GM12878 (cell line): ENCODE measurements at regions of chr3 and their contacts with region 1.

Region 1: DNA sequence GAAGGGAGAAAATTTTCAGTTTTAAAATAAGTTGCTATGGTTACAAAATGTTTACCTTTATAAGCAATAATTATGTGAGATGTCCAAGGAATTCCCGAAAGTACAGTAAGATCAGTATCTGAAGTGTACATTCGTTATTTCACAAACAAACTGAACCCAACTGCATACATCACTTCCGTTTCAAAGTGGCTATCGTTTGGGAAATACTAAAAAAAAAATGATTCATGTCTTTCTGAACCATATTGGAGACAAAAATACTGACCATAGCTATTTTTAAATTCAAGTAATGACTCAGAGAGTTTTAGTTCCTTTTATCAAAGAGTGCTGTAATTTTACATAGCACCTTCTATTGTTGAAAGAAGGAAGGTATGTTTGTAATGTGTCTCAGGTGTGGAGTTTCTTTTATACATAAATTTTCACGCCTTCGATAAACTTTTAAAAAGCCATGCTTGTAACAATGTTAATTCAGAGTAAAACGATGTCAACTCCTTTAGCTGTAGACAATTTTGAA is 8.0 kb upstream of the ANKRD28 start:
- DNase-seq: peak; percentile 89
- ATAC-seq: peak; percentile 71
- H3K4me3 ChIP-seq: peak overlapping the region; percentile 49
- H3K27ac ChIP-seq: peak overlapping the region; percentile 84
- H3K4me1 ChIP-seq: peaks cover 75% of the 10 kb centered on the region
- H3K27me3 ChIP-seq: no peaks in the 10 kb centered on the region
- CTCF ChIP-seq: no peak; a peak in 1 of 6 replicates
- EP300 ChIP-seq: peak; percentile 96 to 99
- POLR2A ChIP-seq: no peak
- RAD21 ChIP-seq: no peak

Region 2: GRCh38 chr3:15015456-15015855 is 790.4 kb before region 1 on chr3:
- CTCF ChIA-PET with region 1: no interaction called
- POLR2A ChIA-PET with region 1: no interaction called
- RAD21 ChIA-PET with region 1: no interaction called
- SMC1A ChIA-PET with region 1: no interaction called
- in situ Hi-C with region 1: no loop called
- intact Hi-C with region 1: no loop called
- DNase-seq: no peak
- ATAC-seq: no peak
- H3K4me3 ChIP-seq: no peak overlapping the region
- H3K27ac ChIP-seq: no peak overlapping the region
- H3K4me1 ChIP-seq: no peaks in the 10 kb centered on the region
- H3K27me3 ChIP-seq: no peaks in the 10 kb centered on the region
- CTCF ChIP-seq: no peak
- EP300 ChIP-seq: no peak
- POLR2A ChIP-seq: no peak
- RAD21 ChIP-seq: no peak

Region 3: DNA sequence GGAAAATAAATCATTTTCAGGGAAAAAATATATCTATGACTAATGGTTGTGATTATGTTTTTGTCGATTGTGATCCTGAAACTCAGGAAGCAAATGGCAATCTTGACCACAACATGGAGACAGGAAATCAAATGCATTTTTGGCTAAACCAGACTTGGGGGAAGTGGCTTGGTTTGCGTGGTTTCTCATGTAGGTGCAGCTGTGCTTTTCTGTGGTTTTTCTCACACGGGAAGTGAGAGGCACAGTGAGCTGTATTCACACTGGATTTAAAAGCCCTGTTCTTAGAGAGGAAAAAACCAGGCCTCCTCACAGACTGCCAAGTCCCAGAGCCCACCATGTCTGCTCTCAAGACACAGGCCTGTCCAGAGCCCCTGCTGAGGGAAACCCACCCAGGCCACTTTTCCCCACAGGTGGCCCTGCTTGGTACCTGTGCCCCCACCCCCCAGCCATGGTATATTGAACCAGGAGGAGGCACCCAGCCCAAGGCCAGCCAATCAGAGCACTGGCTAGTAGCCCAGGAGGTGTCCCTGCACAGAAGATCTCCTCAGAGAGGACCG is 158.1 kb before region 1 on chr3:
- CTCF ChIA-PET with region 1: interaction called, 7 read pairs
- POLR2A ChIA-PET with region 1: interaction called, 4 read pairs
- RAD21 ChIA-PET with region 1: interaction called, 5 read pairs
- SMC1A ChIA-PET with region 1: interaction called, 12 read pairs
- in situ Hi-C with region 1: no loop called
- intact Hi-C with region 1: loop called (anchors 1 kb)
- DNase-seq: peak; percentile 94
- ATAC-seq: peak; percentile 96
- H3K4me3 ChIP-seq: peak overlapping the region; percentile 24
- H3K27ac ChIP-seq: peak overlapping the region; percentile 81
- H3K4me1 ChIP-seq: peaks cover 38% of the 10 kb centered on the region
- H3K27me3 ChIP-seq: no peaks in the 10 kb centered on the region
- CTCF ChIP-seq: no peak
- EP300 ChIP-seq: peak; percentile 87 to 95
- POLR2A ChIP-seq: peak; percentile 30; the same call in 1 of the 2 replicates
- RAD21 ChIP-seq: no peak

Region 4: GRCh38 chr3:15726043-15726442 is 79.8 kb before region 1 on chr3:
- CTCF ChIA-PET with region 1: interaction called, 6 read pairs
- POLR2A ChIA-PET with region 1: interaction called, 5 read pairs
- RAD21 ChIA-PET with region 1: interaction called, 9 read pairs
- SMC1A ChIA-PET with region 1: interaction called, 19 read pairs
- in situ Hi-C with region 1: no loop called
- intact Hi-C with region 1: no loop called
- DNase-seq: peak; percentile 60
- ATAC-seq: peak; percentile 93
- H3K4me3 ChIP-seq: no peak overlapping the region
- H3K27ac ChIP-seq: peak overlapping the region; percentile 71
- H3K4me1 ChIP-seq: peaks cover 18% of the 10 kb centered on the region
- H3K27me3 ChIP-seq: no peaks in the 10 kb centered on the region
- CTCF ChIP-seq: no peak
- EP300 ChIP-seq: no peak
- POLR2A ChIP-seq: no peak
- RAD21 ChIP-seq: no peak

Region 5: DNA sequence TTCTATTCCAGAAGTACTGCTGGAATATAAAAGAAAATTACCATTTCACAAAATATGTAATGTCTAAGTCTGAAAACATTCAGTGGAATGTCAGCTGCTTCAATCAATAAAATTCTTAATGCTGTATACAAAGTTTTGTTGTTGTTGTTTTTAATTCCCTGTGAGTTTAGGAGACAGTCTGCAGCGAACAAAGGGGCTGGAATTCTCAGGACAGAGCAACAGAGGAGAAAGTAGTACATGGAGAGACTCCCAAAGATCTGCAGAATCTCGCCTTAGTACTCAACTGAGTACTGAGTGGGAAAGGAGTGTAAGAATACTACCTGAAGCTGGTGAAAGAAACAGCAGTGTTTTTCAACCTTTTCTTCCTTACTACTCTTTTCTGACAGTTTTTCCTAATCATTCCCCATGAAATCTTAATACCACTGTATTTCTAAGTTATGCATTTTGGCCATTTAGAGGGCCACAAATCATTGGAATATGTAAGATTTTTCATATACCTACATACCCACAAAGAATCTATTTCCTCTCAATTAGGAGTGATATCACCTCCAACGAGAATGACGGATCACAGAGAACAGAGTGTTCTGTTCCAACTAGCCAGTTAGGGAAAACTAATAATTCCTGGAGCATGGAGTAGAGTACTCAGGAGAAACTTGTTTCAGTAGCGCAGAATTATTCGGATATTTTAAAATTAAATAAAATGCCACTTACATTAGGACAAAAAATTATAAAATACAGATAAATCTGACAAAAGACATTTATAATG is 24.0 kb before region 1 on chr3:
- CTCF ChIA-PET with region 1: interaction called, 7 read pairs
- POLR2A ChIA-PET with region 1: interaction called, 3 read pairs
- RAD21 ChIA-PET with region 1: interaction called, 14 read pairs
- SMC1A ChIA-PET with region 1: interaction called, 12 read pairs
- in situ Hi-C with region 1: no loop called
- intact Hi-C with region 1: no loop called
- DNase-seq: no peak
- ATAC-seq: no peak
- H3K4me3 ChIP-seq: no peak overlapping the region
- H3K27ac ChIP-seq: no peak overlapping the region
- H3K4me1 ChIP-seq: no peaks in the 10 kb centered on the region
- H3K27me3 ChIP-seq: no peaks in the 10 kb centered on the region
- CTCF ChIP-seq: no peak
- EP300 ChIP-seq: no peak
- POLR2A ChIP-seq: no peak
- RAD21 ChIP-seq: no peak

Region 6: DNA sequence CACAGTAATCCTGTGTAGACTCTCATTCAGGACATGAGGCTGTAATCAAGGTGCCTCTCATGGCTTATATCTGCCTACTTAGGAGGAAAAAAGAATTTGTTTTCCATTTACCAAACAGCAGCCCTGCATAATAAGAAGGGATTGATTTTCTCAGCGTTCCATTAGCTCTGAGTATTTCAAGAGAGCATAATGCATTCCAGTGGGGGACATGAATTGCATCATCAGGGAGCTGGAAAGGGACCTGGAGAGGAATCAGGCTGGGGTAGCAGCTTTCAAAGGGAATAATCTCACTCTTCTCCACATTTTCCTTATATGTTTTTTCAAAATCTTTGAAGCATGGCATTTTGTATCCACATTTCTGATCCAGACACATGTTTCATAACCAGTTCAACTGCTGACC is 142.6 kb after region 1 on chr3:
- CTCF ChIA-PET with region 1: no interaction called
- POLR2A ChIA-PET with region 1: no interaction called
- RAD21 ChIA-PET with region 1: no interaction called
- SMC1A ChIA-PET with region 1: no interaction called
- in situ Hi-C with region 1: no loop called
- intact Hi-C with region 1: no loop called
- DNase-seq: no peak
- ATAC-seq: no peak
- H3K4me3 ChIP-seq: no peak overlapping the region
- H3K27ac ChIP-seq: no peak overlapping the region
- H3K4me1 ChIP-seq: no peaks in the 10 kb centered on the region
- H3K27me3 ChIP-seq: no peaks in the 10 kb centered on the region
- CTCF ChIP-seq: no peak
- EP300 ChIP-seq: no peak
- POLR2A ChIP-seq: no peak
- RAD21 ChIP-seq: no peak

Region 7: DNA sequence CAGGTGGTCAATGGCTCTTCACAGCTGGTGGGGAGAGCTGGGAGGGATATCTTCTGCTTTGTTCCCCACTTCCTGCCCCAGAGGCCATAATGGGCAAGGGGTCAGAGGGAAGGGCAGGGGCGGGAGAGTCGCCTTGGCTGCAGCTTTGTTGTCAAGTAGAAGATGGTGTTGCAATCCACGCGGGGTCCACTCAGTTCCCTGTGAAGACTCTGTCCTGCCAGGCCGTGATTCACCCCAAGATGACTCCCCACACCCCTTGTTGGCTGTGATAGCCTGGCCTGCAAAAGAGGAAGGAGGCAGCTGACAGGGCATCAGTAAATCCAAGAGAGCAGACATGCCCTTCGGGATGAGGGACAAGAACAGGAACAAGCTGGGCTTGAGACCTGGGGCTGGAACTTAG is 375.6 kb after region 1 on chr3:
- CTCF ChIA-PET with region 1: no interaction called
- POLR2A ChIA-PET with region 1: no interaction called
- RAD21 ChIA-PET with region 1: no interaction called
- SMC1A ChIA-PET with region 1: no interaction called
- in situ Hi-C with region 1: no loop called
- intact Hi-C with region 1: no loop called
- DNase-seq: no peak
- ATAC-seq: no peak
- H3K4me3 ChIP-seq: no peak overlapping the region
- H3K27ac ChIP-seq: no peak overlapping the region
- H3K4me1 ChIP-seq: no peaks in the 10 kb centered on the region
- H3K27me3 ChIP-seq: no peaks in the 10 kb centered on the region; a peak in 1 of 4 replicates
- CTCF ChIP-seq: no peak
- EP300 ChIP-seq: no peak
- POLR2A ChIP-seq: no peak
- RAD21 ChIP-seq: no peak